CD8-positive, alpha-beta T cell (primary cell): ENCODE measurements at regions of chr16 and their contacts with region 1.

Region 1: GRCh38 chr16:1420111-1420540 is 421 bp downstream of the UQCC4 start:
- DNase-seq: peak in 1 of 9 experiments; percentile 16
- ATAC-seq: no peak
- H3K4me3 ChIP-seq: peak overlapping the region; percentile 85 to 95
- H3K4me3 Mint-ChIP-seq: peak overlapping the region; percentile 92
- H3K27ac ChIP-seq: peak overlapping the region; percentile 81 to 98
- H3K27ac Mint-ChIP-seq: peak overlapping the region; percentile 76
- H3K4me1 ChIP-seq: peaks cover 19% of the 10 kb centered on the region
- H3K4me1 Mint-ChIP-seq: peaks cover 29% of the 10 kb centered on the region
- H3K27me3 ChIP-seq: no peaks in the 10 kb centered on the region
- H3K27me3 Mint-ChIP-seq: no peaks in the 10 kb centered on the region
- CTCF ChIP-seq: no peak

Region 2: GRCh38 chr16:1351582-1352362 is 68.4 kb before region 1 on chr16 and contains the starts of genes GNPTG and TSR3:
- CTCF ChIA-PET with region 1: no interaction called
- POLR2A ChIA-PET with region 1: no interaction called
- intact Hi-C with region 1: loop called in 1 of 2 experiments (anchors 2 kb)
- DNase-seq: peak; percentile 68 to 95 (median 82)
- ATAC-seq: peak; percentile 87
- H3K4me3 ChIP-seq: peak within 1 kb of the TSS; percentile 76 to 84
- H3K4me3 Mint-ChIP-seq: peak within 1 kb of the TSS; percentile 82
- H3K27ac ChIP-seq: peak within 1 kb of the TSS; percentile 39 to 50
- H3K27ac Mint-ChIP-seq: peak within 1 kb of the TSS; percentile 72
- H3K4me1 ChIP-seq: peaks cover 24% of the 10 kb centered on the region
- H3K4me1 Mint-ChIP-seq: peaks cover 35% of the 10 kb centered on the region
- H3K27me3 ChIP-seq: no peaks in the 10 kb centered on the region
- H3K27me3 Mint-ChIP-seq: no peaks in the 10 kb centered on the region
- CTCF ChIP-seq: no peak
- total RNA-seq, gene GNPTG: 30.7 to 31.9 TPM
- total RNA-seq, gene TSR3: 21.6 to 22.7 TPM

Region 3: DNA sequence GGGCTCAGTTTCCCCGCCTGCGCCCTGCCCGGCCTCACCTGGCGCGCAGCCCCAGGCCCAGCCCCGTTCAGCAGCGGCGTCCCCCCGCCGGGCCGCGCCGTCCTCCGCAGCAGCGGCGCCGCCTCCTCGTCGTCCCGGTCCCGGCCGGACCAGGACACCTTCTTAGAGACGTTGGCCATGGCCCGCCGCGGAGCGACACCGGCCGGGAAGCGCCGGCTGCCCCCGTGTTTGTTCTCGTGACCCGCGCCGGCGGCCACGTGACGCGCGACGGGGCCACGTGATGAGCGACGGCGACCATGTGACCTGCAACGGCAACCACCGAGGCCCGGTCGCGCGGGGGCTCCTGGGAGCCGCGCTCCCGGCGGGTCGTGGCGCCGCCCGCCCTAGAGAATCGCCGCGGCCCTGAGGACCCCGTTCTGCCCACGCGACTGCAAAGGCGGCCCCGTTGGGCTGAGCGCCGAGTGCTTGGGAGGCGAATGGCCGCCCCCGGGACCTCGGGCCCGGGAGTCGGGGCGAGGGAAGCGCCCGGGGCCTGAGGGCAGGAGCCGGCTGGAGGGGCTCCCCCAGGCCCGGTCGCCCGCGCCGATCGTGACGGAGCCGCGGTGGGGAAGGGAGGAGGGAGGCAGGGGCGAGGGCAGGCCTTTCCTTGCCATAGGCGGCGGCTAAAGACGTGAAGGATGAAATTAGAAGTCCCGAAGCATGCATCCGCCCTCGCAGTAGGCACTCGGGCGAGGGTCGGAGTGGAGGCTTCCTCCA is 54.8 kb after region 1 on chr16 and contains the start of gene CLCN7:
- CTCF ChIA-PET with region 1: no interaction called
- POLR2A ChIA-PET with region 1: interaction called, 6 read pairs
- intact Hi-C with region 1: loop called (anchors 1 kb)
- DNase-seq: peak; percentile 58 to 93 (median 87)
- ATAC-seq: peak; percentile 82
- H3K4me3 ChIP-seq: peak within 1 kb of the TSS; percentile 60 to 84
- H3K4me3 Mint-ChIP-seq: peak within 1 kb of the TSS; percentile 83
- H3K27ac ChIP-seq: peak within 1 kb of the TSS; percentile 75 to 81
- H3K27ac Mint-ChIP-seq: peak within 1 kb of the TSS; percentile 90
- H3K4me1 ChIP-seq: peaks cover 31% of the 10 kb centered on the region
- H3K4me1 Mint-ChIP-seq: peaks cover 40% of the 10 kb centered on the region
- H3K27me3 ChIP-seq: no peaks in the 10 kb centered on the region
- H3K27me3 Mint-ChIP-seq: no peaks in the 10 kb centered on the region
- CTCF ChIP-seq: no peak
- total RNA-seq, gene CLCN7: 85.7 to 90.0 TPM

Region 4: GRCh38 chr16:1543085-1543896 is 123.2 kb after region 1 on chr16:
- CTCF ChIA-PET with region 1: interaction called, 5 read pairs
- POLR2A ChIA-PET with region 1: no interaction called
- intact Hi-C with region 1: loop called in 1 of 2 experiments (anchors 5 kb)
- DNase-seq: peak in 5 of 9 experiments; percentile 42 to 65 (median 48)
- ATAC-seq: peak; percentile 68
- H3K4me3 ChIP-seq: no peak overlapping the region
- H3K4me3 Mint-ChIP-seq: peak overlapping the region; percentile 44
- H3K27ac ChIP-seq: peak overlapping the region; percentile 4 to 44
- H3K27ac Mint-ChIP-seq: peak overlapping the region; percentile 76
- H3K4me1 ChIP-seq: peaks cover 93% of the 10 kb centered on the region
- H3K4me1 Mint-ChIP-seq: peaks cover 71% of the 10 kb centered on the region
- H3K27me3 ChIP-seq: no peaks in the 10 kb centered on the region
- H3K27me3 Mint-ChIP-seq: no peaks in the 10 kb centered on the region
- CTCF ChIP-seq: no peak

Region 5: DNA sequence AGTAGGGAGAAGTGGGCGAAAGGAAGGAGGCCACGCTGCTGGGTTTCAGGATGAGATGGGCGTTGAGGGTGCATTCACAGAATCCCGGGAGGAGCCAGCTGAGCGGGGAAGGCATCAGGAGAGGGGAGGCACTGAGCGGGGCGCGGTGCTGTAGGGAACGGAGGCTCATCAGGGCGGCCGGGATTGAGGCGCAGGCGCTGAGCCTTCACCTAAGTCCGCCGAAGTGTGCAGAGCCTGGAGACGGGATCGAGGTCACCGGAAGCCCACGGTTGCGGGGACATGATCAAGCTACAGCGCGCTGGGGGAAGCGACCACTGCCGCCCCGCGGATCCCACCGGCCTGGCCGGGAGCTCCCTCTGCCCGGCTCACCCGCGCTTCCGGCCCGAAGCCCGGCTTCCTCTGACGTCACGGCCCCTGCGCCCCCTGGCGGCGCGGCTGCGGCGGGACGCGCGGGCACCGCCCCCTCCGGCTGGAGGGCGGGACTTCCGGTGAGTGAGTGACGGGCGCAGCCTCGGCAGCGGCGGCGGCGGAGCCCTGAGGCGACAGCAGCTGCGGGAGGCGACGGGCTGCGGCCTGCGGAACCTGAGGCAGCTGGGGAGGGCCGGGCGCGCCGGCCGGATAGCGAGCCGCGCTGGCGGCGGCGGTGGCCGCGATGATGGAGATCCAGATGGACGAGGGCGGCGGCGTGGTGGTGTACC is 285.7 kb after region 1 on chr16 and contains the start of gene MAPK8IP3:
- CTCF ChIA-PET with region 1: interaction called, 6 read pairs
- POLR2A ChIA-PET with region 1: interaction called, 9 read pairs
- intact Hi-C with region 1: loop called (anchors 1 to 5 kb)
- DNase-seq: peak; percentile 88 to 99 (median 95)
- ATAC-seq: peak; percentile 74
- H3K4me3 ChIP-seq: peak within 1 kb of the TSS; percentile 94 to 99
- H3K4me3 Mint-ChIP-seq: peak within 1 kb of the TSS; percentile 99
- H3K27ac ChIP-seq: peak within 1 kb of the TSS; percentile 83 to 90
- H3K27ac Mint-ChIP-seq: peak within 1 kb of the TSS; percentile 97
- H3K4me1 ChIP-seq: peaks cover 32% of the 10 kb centered on the region
- H3K4me1 Mint-ChIP-seq: peaks cover 43% of the 10 kb centered on the region
- H3K27me3 ChIP-seq: no peaks in the 10 kb centered on the region
- H3K27me3 Mint-ChIP-seq: no peaks in the 10 kb centered on the region
- CTCF ChIP-seq: peak; percentile 92
- total RNA-seq, gene MAPK8IP3: 381 to 419 TPM

Region 6: DNA sequence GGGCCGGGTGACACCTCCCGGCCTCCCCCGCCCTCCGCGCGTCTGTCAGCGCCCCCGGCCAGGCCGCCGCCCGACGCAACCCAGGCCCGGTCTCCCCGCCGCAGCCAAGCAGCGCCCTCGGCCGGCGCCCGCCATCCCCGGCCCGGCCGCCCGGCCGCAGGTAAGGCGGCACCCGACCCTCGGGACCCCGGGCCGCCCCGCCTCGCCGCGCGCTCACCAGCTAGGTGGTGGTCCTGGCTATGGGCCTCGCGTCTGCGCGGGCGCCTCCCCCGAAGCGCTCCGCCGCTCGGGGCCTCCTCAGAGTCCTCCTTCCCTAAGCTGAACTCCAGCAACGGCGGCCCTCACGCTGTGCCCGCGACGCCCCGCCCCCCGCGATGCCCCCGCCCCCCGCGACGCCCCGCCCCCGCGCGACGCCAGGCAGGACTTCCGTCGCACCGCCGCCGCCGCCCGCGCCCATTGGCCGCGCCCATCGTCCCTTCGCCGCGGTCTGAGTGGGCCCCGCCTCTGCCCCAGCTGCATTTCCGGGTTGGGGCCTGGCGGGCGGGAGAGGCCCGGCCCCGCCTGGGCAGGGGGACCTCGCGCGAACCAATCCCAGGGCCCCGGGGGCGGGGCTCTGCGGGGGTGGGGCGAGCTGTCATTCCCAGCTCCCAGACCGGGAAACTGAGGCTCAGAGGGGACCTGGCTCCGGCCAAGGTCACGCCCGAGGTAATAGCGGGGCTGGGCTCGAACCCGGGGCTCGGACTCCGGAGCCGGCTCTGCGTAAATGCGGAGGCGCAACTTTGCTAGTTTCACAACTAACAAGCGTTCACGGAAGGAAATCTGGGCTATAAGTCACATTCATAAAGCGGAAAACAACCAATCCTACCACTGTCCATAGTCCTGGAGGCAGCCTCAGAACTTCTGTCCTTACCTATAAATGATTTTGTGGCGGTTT is 1253.2 kb after region 1 on chr16:
- CTCF ChIA-PET with region 1: no interaction called
- POLR2A ChIA-PET with region 1: no interaction called
- intact Hi-C with region 1: loop called in 1 of 2 experiments (anchors 5 kb)
- DNase-seq: peak; percentile 91 to 98 (median 95)
- ATAC-seq: peak; percentile 92
- H3K4me3 ChIP-seq: peak overlapping the region; percentile 80 to 94
- H3K4me3 Mint-ChIP-seq: peak overlapping the region; percentile 84
- H3K27ac ChIP-seq: peak overlapping the region; percentile 76 to 78
- H3K27ac Mint-ChIP-seq: peak overlapping the region; percentile 80
- H3K4me1 ChIP-seq: peaks cover 14% of the 10 kb centered on the region
- H3K4me1 Mint-ChIP-seq: peaks cover 35% of the 10 kb centered on the region
- H3K27me3 ChIP-seq: no peaks in the 10 kb centered on the region
- H3K27me3 Mint-ChIP-seq: no peaks in the 10 kb centered on the region
- CTCF ChIP-seq: no peak